Common myeloid progenitor, CD34-positive (primary cell): ENCODE measurements at regions of chr2 and their contacts with region 1.

Region 1: GRCh38 chr2:187499941-187500532 is 52.0 kb upstream of the CALCRL start:
- DNase-seq: peak; percentile 69 to 80 (median 71)
- H3K4me3 ChIP-seq: no peak overlapping the region
- H3K27ac ChIP-seq: no peak overlapping the region
- H3K4me1 ChIP-seq: peaks cover 0 to 24% (median 8%) of the 10 kb centered on the region in 4 experiments
- H3K27me3 ChIP-seq: no peaks in the 10 kb centered on the region

Region 2: DNA sequence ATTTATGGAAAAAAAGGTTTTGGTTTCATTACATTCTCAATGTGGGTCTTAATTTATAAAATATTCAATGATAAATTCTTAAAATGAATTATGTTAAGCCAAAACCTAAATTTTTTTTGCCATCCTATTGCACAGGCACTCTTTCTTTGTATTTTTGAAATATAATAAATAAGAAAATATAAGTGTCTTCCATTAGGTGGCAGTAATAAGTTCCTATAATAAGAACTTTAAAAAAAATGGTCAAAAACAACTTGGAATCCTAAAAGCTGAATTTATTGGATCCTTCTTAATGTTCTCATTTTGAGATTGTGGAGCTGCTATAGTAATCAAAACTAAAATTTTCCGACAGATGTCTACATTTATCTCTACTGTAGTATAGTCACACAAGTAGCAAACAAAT is 57.7 kb before region 1 on chr2:
- CTCF ChIA-PET with region 1: no interaction called
- POLR2A ChIA-PET with region 1: no interaction called
- DNase-seq: peak in 2 of 3 donors; percentile 38 to 39
- H3K4me3 ChIP-seq: no peak overlapping the region
- H3K27ac ChIP-seq: no peak overlapping the region
- H3K4me1 ChIP-seq: peaks cover 0 to 18% (median 5%) of the 10 kb centered on the region in 4 experiments
- H3K27me3 ChIP-seq: no peaks in the 10 kb centered on the region

Region 3: GRCh38 chr2:187547353-187547979 is 47.4 kb after region 1 on chr2:
- CTCF ChIA-PET with region 1: interaction called, 20 read pairs
- POLR2A ChIA-PET with region 1: no interaction called
- DNase-seq: peak; percentile 65 to 94 (median 92)
- H3K4me3 ChIP-seq: no peak overlapping the region
- H3K27ac ChIP-seq: peak overlapping the region; percentile 47 to 54
- H3K4me1 ChIP-seq: peaks cover 0 to 54% (median 12%) of the 10 kb centered on the region in 4 experiments
- H3K27me3 ChIP-seq: no peaks in the 10 kb centered on the region

Region 4: GRCh38 chr2:187567126-187567525 is 67.1 kb after region 1 on chr2:
- CTCF ChIA-PET with region 1: interaction called, 12 read pairs
- POLR2A ChIA-PET with region 1: no interaction called
- DNase-seq: peak in 2 of 3 donors; percentile 44 to 49
- H3K4me3 ChIP-seq: no peak overlapping the region
- H3K27ac ChIP-seq: no peak overlapping the region
- H3K4me1 ChIP-seq: no peaks in the 10 kb centered on the region
- H3K27me3 ChIP-seq: no peaks in the 10 kb centered on the region

Region 5: GRCh38 chr2:187574969-187575750 is 75.1 kb after region 1 on chr2:
- CTCF ChIA-PET with region 1: interaction called, 225 read pairs
- POLR2A ChIA-PET with region 1: no interaction called
- DNase-seq: no peak
- H3K4me3 ChIP-seq: no peak overlapping the region
- H3K27ac ChIP-seq: no peak overlapping the region
- H3K4me1 ChIP-seq: peaks cover 0 to 9% (median 4%) of the 10 kb centered on the region in 4 experiments
- H3K27me3 ChIP-seq: no peaks in the 10 kb centered on the region

Region 6: DNA sequence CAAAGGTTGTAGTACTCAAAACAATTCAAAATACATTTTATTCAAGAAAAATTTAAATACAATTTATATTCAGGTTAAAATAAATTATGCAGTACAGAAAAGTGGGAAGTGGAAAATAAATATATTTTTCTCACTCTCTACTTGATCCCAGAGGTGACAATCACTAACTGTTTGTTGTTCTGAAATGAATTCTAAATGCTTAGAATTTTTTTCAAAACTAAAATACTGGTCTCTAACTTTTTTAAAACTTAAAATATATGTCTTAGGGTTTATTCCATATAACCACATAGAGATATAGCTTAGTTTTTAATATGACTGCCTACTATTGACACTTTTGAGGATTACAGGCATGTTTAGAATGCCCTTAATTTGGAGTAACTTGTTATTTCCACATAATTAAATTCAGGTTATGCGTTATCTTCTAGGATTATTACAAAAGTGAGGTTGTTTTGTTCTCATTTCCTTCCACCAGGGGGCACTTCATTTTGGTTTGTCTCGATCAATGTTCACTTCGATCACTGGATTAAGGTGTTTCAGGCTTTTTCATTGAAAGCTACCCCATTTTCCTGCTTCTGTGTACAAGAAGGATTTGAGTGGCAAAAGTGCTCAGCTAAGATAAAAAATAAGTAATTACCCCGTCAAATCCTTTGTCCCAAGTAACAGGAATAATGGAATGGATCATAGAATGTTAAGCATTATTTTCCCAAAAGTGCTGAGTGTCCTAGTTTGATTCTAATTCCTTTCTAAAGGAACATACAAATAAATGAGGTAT is 81.3 kb after region 1 on chr2:
- CTCF ChIA-PET with region 1: interaction called, 225 read pairs
- POLR2A ChIA-PET with region 1: no interaction called
- DNase-seq: peak; percentile 63 to 72 (median 66)
- H3K4me3 ChIP-seq: peak overlapping the region in 6 of 7 experiments; percentile 26 to 75 (median 48)
- H3K27ac ChIP-seq: peak overlapping the region; percentile 40 to 81
- H3K4me1 ChIP-seq: peaks cover 3 to 11% (median 8%) of the 10 kb centered on the region in 4 experiments
- H3K27me3 ChIP-seq: no peaks in the 10 kb centered on the region

Region 7: GRCh38 chr2:187842978-187843847 is 343.2 kb after region 1 on chr2:
- CTCF ChIA-PET with region 1: interaction called, 40 read pairs
- POLR2A ChIA-PET with region 1: no interaction called
- DNase-seq: peak; percentile 63 to 81 (median 79)
- H3K4me3 ChIP-seq: no peak overlapping the region
- H3K27ac ChIP-seq: no peak overlapping the region
- H3K4me1 ChIP-seq: no peaks in the 10 kb centered on the region
- H3K27me3 ChIP-seq: peaks cover 0 to 3% (median 0%) of the 10 kb centered on the region in 5 experiments